Adrenal gland (tissue), 19 donors: ENCODE measurements at regions of chr10 and their contacts with region 1.

Region 1: DNA sequence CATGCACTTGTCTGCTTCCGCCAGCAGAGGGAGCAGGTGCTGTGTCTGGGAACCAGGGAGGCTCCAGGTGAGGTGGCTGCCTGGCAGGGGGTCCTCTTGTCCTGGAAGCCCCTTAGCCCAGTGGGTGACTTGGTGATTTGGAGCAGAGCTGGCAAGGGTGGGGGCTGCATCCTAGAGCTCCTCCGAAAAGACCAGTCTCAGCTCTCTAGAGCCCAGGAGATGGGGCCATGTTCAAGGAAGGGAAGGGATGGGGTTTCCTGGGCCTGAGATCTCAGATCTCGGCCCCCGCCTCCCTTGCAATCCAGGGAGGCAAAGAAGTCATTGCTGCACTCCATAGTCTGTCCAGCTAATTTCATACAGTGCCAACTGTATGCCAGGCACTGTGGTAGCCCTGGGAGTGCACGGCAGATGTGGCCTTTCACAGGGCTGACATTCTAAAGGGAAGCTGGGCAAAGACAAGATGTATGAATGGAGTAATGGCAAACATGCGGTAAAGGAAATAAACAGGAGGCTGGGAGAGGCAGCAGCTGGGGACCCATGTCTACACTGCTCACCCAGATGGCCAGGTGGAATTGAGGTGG is 20.4 kb upstream of the SFRP5 start:
- DNase-seq: peak; percentile 54 to 85 (median 72)
- H3K4me3 ChIP-seq: no peak overlapping the region
- H3K27ac ChIP-seq: no peak overlapping the region
- H3K4me1 ChIP-seq: peaks cover 0 to 7% of the 10 kb centered on the region in 2 donors
- H3K27me3 ChIP-seq: peaks cover 6% of the 10 kb centered on the region
- CTCF ChIP-seq: peak; percentile 76 to 90 (median 84)
- POLR2A ChIP-seq: no peak

Region 2: GRCh38 chr10:97601268-97602215 is 190.7 kb before region 1 on chr10:
- intact Hi-C with region 1: no loop called
- DNase-seq: no peak
- H3K4me3 ChIP-seq: no peak overlapping the region
- H3K27ac ChIP-seq: no peak overlapping the region
- H3K4me1 ChIP-seq: peaks cover 7 to 17% of the 10 kb centered on the region in 2 donors
- H3K27me3 ChIP-seq: no peaks in the 10 kb centered on the region
- CTCF ChIP-seq: no peak
- POLR2A ChIP-seq: no peak

Region 3: GRCh38 chr10:97869091-97870042 is 77.1 kb after region 1 on chr10:
- intact Hi-C with region 1: loop called (anchors 2 to 5 kb)
- DNase-seq: peak; percentile 81 to 95 (median 91)
- H3K4me3 ChIP-seq: no peak overlapping the region
- H3K27ac ChIP-seq: no peak overlapping the region
- H3K4me1 ChIP-seq: peaks cover 0 to 5% of the 10 kb centered on the region in 2 donors
- H3K27me3 ChIP-seq: no peaks in the 10 kb centered on the region
- CTCF ChIP-seq: peak; percentile 76 to 98 (median 96)
- POLR2A ChIP-seq: no peak

Region 4: DNA sequence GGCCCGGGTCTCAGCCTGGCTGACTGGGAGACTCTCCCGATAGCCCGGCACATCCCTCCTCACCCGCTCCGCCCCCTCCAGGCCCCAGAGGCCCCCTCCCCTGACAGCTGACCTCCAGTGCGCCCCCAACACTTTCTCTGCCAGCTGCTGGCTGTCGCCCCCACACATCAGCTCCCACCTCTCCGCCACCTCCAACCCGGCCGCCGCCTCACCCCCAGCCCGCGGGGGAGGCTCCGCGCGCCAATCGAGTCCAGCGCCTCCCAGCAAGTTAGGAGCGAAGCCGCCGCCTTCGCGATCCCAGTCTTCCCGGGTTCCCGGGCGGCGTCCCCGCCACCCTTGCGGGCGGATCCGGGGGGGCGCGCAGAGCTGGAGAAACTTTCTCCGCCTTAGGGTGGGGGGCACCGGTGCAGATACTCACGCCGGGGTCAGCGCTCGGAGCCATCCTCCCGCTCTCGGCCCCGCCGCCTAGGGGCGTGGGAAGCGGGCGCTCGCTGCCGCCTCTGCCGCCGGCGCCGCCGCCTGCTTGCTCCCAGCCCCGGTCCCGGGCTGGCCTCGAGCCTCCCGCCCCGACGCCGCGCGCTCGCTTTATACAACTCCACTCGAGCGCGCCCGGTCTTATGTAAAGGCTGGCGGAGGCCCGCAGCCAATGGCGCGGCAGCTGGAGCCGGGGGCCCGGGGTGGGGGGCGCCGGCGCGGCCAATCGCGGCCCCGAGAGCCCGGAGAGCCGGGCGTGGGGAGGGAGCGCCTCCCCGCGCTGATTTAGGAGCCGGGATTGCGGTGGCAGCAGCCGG is 238.0 kb after region 1 on chr10 and contains the start of gene CRTAC1:
- intact Hi-C with region 1: loop called in 1 of 2 experiments (anchors 10 kb)
- DNase-seq: peak in 3 of 7 donors; percentile 29 to 47 (median 31)
- H3K4me3 ChIP-seq: peak within 1 kb of the TSS in 1 of 4 donors; percentile 47
- H3K27ac ChIP-seq: no peak within 1 kb of the TSS
- H3K4me1 ChIP-seq: peaks cover 4 to 11% of the 10 kb centered on the region in 2 donors
- H3K27me3 ChIP-seq: peaks cover 25% of the 10 kb centered on the region
- CTCF ChIP-seq: no peak
- POLR2A ChIP-seq: peak in 1 of 2 donors; percentile 20
- total RNA-seq, gene CRTAC1: 0.11 to 0.97 (median 0.42) TPM in 5 of 9 donors, not detected in the others